Left ventricle myocardium superior (tissue), 1 donor: ENCODE measurements at regions of chr11 and their contacts with region 1.

Region 1: DNA sequence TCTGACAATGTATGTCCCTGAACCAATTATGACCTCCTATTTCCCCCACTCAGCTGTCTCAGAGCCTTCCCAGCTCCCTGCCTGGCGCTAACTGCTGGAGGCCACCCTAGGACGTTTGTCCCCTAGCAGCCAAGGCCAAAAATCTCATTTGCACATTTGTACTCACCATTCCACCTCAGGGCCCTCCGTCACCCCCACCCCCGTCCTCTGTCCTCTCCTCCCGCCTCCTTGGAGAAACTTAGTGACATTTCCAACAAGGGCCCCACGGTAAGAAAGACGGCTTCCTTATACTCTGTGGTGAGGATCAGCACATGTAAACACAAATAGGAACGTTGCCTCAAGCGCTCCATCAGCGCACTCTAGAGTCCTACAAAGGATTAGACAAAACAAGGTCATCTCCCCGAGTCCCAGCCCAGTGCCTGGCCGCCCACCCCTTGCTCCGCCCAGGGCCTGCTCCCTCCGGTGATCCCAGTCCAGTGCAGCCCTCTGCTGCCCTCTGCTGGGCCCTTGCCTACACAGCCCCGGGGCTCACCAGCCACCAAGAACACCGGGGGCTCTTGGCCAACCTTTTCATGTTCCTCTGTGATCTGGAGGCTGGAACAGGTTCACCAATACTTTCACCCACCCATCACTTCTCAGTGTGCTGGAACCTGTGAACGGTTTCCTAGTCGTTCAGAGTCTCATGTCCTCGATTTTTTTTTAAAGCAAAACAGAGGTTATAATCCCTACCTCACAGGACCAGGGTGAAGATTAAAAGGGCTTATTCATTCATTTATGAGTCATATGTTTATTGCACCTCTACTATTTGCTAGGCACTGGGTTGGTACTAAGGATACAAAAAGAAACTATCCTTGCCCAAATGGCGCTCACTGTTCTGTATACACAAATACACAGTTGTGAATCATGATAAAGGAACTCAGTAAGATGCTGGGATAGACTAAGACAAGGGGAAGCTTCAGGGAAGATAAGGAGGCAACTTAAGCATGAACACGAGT is 15.3 kb upstream of the CTR9 start:
- DNase-seq: peak; percentile 97
- ATAC-seq: peak; percentile 100

Region 2: DNA sequence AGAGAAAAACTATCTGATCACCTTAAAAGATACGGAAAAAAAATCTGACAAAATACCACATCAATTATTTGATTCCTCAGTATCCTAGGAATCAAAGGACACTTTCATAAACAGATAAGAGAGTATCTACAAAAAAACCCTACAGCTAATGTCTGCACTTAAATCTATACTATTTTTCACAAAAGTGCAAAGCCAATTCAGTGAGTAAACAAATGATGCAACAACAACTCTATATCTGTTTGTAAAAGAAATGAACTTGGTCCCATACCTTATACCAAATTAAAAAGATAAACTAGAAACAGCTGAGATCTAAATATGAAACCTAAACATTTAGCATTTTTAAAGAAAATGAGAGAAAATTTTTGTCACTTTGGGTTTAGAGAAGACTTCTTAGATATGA is 808.1 kb before region 1 on chr11:
- intact Hi-C with region 1: no loop called
- DNase-seq: no peak
- ATAC-seq: no peak

Region 3: DNA sequence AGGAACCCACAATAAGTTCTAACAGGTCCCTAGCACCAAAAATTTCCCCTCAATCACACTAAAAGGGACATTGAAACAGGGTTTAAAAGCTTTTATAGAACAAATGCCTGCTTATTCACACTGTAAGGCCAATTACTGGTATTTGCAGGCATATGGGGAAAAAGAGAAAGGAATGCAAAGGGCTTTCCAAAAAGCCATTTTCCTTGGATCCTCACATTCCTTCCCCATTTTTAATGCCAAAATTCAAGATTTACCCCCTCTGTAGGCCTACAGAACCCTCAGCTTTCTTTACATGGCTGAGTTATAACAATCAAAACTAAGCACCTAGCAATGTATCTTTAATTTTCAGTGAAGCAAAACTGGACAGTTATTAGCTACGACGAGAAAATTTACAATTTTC is 543.7 kb before region 1 on chr11:
- intact Hi-C with region 1: no loop called
- DNase-seq: no peak
- ATAC-seq: no peak

Region 4: GRCh38 chr11:10405855-10406592 is 329.8 kb before region 1 on chr11:
- intact Hi-C with region 1: loop called (anchors 2 kb)
- DNase-seq: peak; percentile 46
- ATAC-seq: peak; percentile 91

Region 5: GRCh38 chr11:10514210-10514609 is 221.6 kb before region 1 on chr11:
- intact Hi-C with region 1: loop called (anchors 5 kb)
- DNase-seq: no peak
- ATAC-seq: no peak

Region 6: GRCh38 chr11:10641177-10641911 is 94.4 kb before region 1 on chr11:
- intact Hi-C with region 1: loop called (anchors 10 kb)
- DNase-seq: no peak
- ATAC-seq: peak; percentile 45